Astrocyte of the cerebellum (primary cell): ENCODE measurements at regions of chr2 and their contacts with region 1.

Region 1: GRCh38 chr2:177332041-177332991 is 60.3 kb upstream of the AGPS start:
- DNase-seq: peak; percentile 72
- H3K4me3 ChIP-seq: no peak overlapping the region
- CTCF ChIP-seq: peak; percentile 62

Region 2: GRCh38 chr2:175990099-175990498 is 1342.2 kb before region 1 on chr2:
- in situ Hi-C with region 1: no loop called
- DNase-seq: no peak
- H3K4me3 ChIP-seq: no peak overlapping the region
- CTCF ChIP-seq: no peak

Region 3: GRCh38 chr2:177618255-177619253 is 286.2 kb after region 1 on chr2:
- in situ Hi-C with region 1: loop called (anchors 25 kb)
- DNase-seq: peak; percentile 69
- H3K4me3 ChIP-seq: peak overlapping the region; percentile 68
- CTCF ChIP-seq: no peak

Region 4: GRCh38 chr2:177724398-177725287 is 392.3 kb after region 1 on chr2:
- in situ Hi-C with region 1: loop called (anchors 10 kb)
- DNase-seq: peak; percentile 33
- H3K4me3 ChIP-seq: no peak overlapping the region
- CTCF ChIP-seq: peak; percentile 95